ENCODE measurements at regions of chr12 and their contacts with region 1.

Region 1: DNA sequence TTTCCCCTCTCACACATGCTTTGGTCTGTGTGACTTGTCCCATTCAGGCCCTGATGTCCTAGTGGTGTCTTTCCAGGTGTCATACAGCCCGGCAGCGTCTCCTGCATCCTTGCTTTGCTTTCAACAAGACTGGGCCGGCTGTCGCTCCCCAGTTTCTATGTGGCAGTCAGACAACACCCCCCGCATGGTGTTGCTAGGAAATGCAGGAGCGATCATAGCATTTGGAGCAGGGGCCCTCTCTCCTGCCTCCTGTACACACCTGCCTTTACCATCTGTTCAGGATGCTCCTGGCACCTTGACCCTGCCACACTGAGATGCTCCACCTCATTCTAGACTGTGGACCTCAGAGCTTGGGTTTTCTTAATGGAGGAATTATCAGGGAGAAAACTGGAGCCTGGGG is 29.5 kb downstream of the CACNA1C start:
- DNase-seq: no peak
- H3K4me3 ChIP-seq: no peak overlapping the region
- H3K27ac ChIP-seq: no peak overlapping the region
- H3K4me1 ChIP-seq: no peaks in the 10 kb centered on the region
- H3K27me3 ChIP-seq: no peaks in the 10 kb centered on the region
- CTCF ChIP-seq: no peak
- POLR2A ChIP-seq: no peak

Region 2: GRCh38 chr12:2060759-2061158 is 21.6 kb before region 1 on chr12:
- intact Hi-C with region 1: loop called (anchors 1 kb)
- DNase-seq: no peak
- H3K4me3 ChIP-seq: no peak overlapping the region
- H3K27ac ChIP-seq: peak overlapping the region; percentile 14 to 48
- H3K4me1 ChIP-seq: peaks cover 3 to 4% of the 10 kb centered on the region in 2 donors
- H3K27me3 ChIP-seq: no peaks in the 10 kb centered on the region
- CTCF ChIP-seq: no peak
- POLR2A ChIP-seq: no peak

Measured in breast epithelium (tissue), 4 donors.